GM18951 (cell line): ENCODE measurements at regions of chr9 and their contacts with region 1.

Region 1: GRCh38 chr9:121545875-121546423 is 46.3 kb upstream of the GGTA1 start:
- POLR2A ChIP-seq: no peak

Region 2: DNA sequence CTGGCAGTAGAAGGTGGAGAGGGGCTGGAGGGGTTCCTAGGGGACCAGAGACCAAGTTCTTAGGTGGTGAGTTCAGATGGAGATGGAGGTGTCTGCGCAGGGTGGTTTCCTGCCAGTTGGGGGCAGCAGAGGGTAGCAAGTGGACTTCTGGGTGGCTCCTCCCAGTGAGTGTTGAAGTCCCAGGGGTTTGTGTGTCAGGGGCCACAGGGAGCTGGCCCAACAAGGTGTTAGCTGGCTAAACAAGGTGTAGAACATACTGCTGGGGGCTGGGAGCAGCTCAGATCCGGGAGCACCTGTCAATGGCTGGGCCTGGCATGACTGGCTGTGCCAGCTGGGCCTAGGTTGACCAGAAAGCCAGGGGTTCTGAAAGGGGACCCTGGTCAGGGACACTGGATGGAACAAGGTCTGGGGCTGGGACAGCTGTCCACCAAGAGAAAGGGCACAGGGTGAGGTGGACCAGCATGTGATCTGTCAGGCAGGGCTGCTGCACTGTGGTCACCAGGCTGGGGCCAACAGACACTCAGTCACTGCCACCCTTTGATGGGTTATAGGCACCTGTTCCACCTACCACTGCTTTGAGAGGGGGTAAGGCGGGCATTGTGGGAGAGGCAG is 141.1 kb after region 1 on chr9:
- in situ Hi-C with region 1: loop called (anchors 10 kb)
- POLR2A ChIP-seq: no peak

Region 3: GRCh38 chr9:121992571-121993212 is 446.7 kb after region 1 on chr9:
- in situ Hi-C with region 1: loop called (anchors 10 kb)
- POLR2A ChIP-seq: no peak